Activated CD8-positive, alpha-beta T cell treated with anti-CD3 and anti-CD28 coated beads, Interleukin-2, amount 10 ng/mL, durations not matched to agents 7 days and 5 days (primary cell): ENCODE measurements at regions of chr17 and their contacts with region 1.

Region 1: GRCh38 chr17:76121932-76122430 is 18.4 kb upstream of the EXOC7 start:
- DNase-seq: no peak
- ATAC-seq: peak; percentile 31
- H3K4me3 Mint-ChIP-seq: peak overlapping the region; percentile 26
- H3K27ac Mint-ChIP-seq: peak overlapping the region; percentile 73
- H3K4me1 Mint-ChIP-seq: peaks cover 45% of the 10 kb centered on the region
- H3K27me3 Mint-ChIP-seq: no peaks in the 10 kb centered on the region

Region 2: GRCh38 chr17:76072148-76072858 is 49.7 kb before region 1 on chr17 and contains the start of gene SRP68:
- CTCF ChIA-PET with region 1: no interaction called
- POLR2A ChIA-PET with region 1: no interaction called
- DNase-seq: peak; percentile 89
- ATAC-seq: peak; percentile 97
- H3K4me3 Mint-ChIP-seq: peak within 1 kb of the TSS; percentile 96
- H3K27ac Mint-ChIP-seq: peak within 1 kb of the TSS; percentile 91
- H3K4me1 Mint-ChIP-seq: peaks cover 46% of the 10 kb centered on the region
- H3K27me3 Mint-ChIP-seq: peaks cover 33% of the 10 kb centered on the region
- total RNA-seq, gene SRP68: 85.1 to 86.0 TPM

Region 3: DNA sequence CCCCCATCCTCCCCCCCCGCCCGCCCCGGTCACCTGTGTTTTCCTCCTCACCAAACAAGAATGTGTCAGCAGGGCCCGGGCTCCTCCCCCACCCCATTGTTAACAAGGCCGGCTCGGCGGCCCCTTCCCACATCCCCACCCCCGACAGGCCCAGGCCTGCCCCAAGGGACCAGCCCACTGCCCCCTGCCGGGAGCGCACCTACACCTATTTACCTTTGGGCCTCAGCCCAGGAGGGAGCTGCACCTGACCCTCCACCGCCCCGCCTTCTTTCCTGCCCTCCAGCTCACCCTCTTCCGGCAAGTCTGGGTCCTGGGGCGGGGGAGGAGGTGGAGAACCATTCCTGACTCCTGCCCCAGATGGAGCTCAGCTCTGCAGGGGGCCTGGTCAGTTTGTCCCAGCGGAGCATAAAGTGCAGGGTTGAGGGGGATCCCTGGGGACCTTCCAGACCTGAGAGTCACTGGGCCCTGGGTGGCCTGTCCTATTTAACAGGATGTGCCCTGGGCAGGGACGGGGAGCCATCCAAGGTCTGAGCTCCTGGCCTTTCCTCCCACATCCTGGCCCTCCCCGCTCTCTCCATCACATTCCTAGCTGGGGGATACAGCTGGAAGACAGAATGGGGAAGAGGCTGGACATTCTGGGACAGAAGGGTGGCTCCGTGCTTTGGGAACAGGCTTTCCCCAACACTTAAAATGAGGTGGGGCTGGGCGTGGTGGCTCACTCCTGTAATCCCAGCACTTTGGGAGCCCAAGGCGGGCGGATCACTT is 10.8 kb after region 1 on chr17:
- CTCF ChIA-PET with region 1: interaction called, 12 read pairs
- POLR2A ChIA-PET with region 1: no interaction called
- DNase-seq: no peak
- ATAC-seq: no peak
- H3K4me3 Mint-ChIP-seq: no peak overlapping the region
- H3K27ac Mint-ChIP-seq: no peak overlapping the region
- H3K4me1 Mint-ChIP-seq: peaks cover 37% of the 10 kb centered on the region
- H3K27me3 Mint-ChIP-seq: no peaks in the 10 kb centered on the region

Region 4: GRCh38 chr17:76153640-76154039 is 31.7 kb after region 1 on chr17:
- CTCF ChIA-PET with region 1: interaction called, 15 read pairs
- POLR2A ChIA-PET with region 1: no interaction called
- DNase-seq: no peak
- ATAC-seq: no peak
- H3K4me3 Mint-ChIP-seq: no peak overlapping the region
- H3K27ac Mint-ChIP-seq: peak overlapping the region; percentile 43
- H3K4me1 Mint-ChIP-seq: peaks cover 41% of the 10 kb centered on the region
- H3K27me3 Mint-ChIP-seq: no peaks in the 10 kb centered on the region

Region 5: DNA sequence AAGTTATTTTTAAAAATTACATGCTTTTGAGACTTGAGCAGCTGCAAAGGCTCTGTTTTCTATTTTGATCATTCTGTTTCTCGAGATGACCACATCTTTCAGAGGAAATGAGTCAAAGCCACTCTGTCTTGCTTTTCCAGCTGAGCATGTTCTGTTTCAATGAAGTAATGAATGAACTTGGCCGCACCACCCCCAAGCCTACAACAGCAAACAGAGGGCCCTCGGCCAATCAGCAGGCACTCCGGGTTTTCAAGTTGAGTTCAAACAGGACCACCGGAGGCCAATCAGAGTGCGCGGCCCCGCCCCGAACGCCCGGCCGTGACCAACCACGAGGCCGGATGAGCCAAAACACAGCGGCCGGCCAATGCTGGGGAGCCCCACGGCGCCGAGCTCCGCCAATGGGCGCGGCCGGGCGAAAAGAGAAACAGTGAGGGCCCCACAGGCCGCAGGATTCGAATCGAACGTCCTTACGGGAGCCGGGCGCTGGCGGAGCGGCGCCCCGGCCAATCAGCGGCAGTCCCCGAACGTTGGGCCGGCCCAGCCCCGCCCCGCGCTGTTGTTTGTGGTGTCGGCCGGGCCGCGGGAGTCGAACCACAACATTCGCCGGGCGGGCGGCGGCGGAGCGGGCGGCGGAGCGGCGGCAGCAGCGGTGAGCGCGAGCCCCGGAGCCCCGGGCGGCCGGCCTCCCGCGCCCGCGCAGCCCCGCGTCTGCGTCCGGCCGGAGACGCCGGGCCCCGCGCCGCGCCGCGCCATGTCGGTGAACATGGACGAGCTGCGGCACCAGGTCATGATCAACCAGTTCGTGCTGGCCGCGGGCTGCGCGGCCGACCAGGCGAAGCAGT is 143.0 kb after region 1 on chr17 and contains the start of gene UBALD2:
- CTCF ChIA-PET with region 1: interaction called, 10 read pairs
- POLR2A ChIA-PET with region 1: interaction called, 163 read pairs
- DNase-seq: peak; percentile 100
- ATAC-seq: peak; percentile 84
- H3K4me3 Mint-ChIP-seq: peak within 1 kb of the TSS; percentile 95
- H3K27ac Mint-ChIP-seq: peak within 1 kb of the TSS; percentile 99
- H3K4me1 Mint-ChIP-seq: peaks cover 58% of the 10 kb centered on the region
- H3K27me3 Mint-ChIP-seq: no peaks in the 10 kb centered on the region
- total RNA-seq, gene UBALD2: 318 to 359 TPM

Region 6: DNA sequence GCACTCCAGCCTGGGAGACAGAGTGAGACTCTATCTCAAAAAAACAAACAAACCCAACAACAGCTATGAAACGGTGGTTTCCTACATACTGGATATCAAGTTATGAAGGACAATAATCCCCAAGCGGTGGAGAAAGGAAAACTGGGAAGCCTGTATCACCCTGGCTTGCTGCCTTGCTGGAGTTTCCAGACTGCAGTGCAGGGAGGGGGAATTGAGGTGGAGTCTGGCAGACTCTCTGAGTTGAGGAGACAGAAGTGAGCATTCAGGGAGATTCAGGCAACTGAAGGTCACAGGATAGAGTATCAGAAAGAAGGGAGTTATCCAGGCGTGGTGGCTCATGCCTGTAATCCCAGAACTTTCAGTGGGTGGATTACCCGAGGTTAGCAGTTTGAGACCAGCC is 174.2 kb after region 1 on chr17:
- CTCF ChIA-PET with region 1: interaction called, 10 read pairs
- POLR2A ChIA-PET with region 1: no interaction called
- DNase-seq: no peak
- ATAC-seq: no peak
- H3K4me3 Mint-ChIP-seq: no peak overlapping the region
- H3K27ac Mint-ChIP-seq: no peak overlapping the region
- H3K4me1 Mint-ChIP-seq: peaks cover 4% of the 10 kb centered on the region
- H3K27me3 Mint-ChIP-seq: no peaks in the 10 kb centered on the region

Region 7: DNA sequence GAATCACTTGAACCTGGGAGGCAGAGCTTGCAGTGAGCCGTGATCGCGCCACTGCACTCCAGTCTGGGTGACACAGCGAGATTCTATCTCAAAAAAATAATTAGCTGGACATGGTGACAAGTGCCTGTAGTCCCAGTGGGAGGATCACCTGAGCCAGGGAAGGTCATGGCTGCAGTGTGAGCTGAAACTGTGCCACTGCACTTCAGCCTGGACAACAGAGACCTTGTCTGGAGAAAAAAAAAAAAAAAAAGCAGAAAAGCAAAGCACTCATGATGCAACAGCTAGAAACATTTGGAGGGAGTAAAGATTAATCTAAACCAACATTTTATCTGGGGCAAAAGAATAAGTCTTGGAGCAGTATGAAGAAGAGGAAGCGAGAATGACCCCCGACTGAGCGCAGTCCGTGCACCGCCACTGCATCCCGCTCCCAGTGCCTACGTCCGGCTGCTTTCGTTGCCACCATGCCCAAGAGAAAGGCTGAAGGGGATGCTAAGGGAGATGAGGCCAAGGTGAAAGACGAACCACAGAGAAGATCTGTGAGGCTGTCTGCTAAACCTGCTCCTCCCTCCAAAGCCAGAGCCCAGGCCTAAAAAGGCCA is 223.5 kb after region 1 on chr17:
- CTCF ChIA-PET with region 1: no interaction called
- POLR2A ChIA-PET with region 1: no interaction called
- DNase-seq: no peak
- ATAC-seq: no peak
- H3K4me3 Mint-ChIP-seq: no peak overlapping the region
- H3K27ac Mint-ChIP-seq: no peak overlapping the region
- H3K4me1 Mint-ChIP-seq: peaks cover 1% of the 10 kb centered on the region
- H3K27me3 Mint-ChIP-seq: no peaks in the 10 kb centered on the region

Region 8: DNA sequence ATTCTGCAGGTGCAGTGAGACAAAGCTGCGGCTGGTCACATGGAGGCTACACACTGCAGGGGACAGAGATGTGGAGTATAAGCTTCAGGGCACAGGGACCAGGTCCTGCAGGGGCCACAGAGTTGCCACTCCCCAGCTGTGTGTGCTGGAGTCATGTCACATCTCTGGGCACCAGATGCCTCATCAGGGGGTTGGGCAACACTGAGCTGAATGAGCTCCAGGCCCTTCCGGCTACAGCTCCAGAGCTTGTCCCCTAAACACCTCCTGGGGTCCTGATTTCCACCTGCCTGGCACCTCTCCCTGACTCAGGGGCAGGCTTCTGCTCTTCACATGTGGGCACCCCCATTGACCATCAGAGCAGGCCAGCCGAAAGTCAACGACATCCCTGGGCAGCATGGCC is 294.9 kb after region 1 on chr17:
- CTCF ChIA-PET with region 1: no interaction called
- POLR2A ChIA-PET with region 1: no interaction called
- DNase-seq: no peak
- ATAC-seq: no peak
- H3K4me3 Mint-ChIP-seq: no peak overlapping the region
- H3K27ac Mint-ChIP-seq: no peak overlapping the region
- H3K4me1 Mint-ChIP-seq: no peaks in the 10 kb centered on the region
- H3K27me3 Mint-ChIP-seq: no peaks in the 10 kb centered on the region